Posterior vena cava (tissue), 2 donors: ENCODE measurements at regions of chr10 and their contacts with region 1.

Region 1: GRCh38 chr10:66085906-66086305 is 839.9 kb upstream of the LRRTM3 start:
- DNase-seq: no peak

Region 2: DNA sequence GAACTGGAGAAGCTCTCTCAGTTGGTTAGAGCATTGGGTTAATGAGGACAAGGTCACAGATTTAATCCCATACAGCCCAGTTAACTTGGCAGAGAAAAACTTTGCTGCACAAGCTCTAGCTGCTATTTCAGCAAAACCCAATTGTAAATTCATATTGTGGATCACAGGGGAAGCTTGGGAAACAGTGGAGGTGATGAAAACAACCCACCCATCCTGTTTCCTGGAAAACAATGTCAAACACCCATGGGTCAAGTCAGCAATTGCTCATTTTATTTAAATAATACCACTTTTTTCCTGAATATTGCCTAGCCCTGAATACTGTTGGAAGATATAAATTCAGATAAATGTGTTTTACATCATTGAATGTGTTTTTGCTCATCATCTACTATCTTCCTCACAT is 60.7 kb before region 1 on chr10:
- intact Hi-C with region 1: no loop called
- DNase-seq: no peak

Region 3: DNA sequence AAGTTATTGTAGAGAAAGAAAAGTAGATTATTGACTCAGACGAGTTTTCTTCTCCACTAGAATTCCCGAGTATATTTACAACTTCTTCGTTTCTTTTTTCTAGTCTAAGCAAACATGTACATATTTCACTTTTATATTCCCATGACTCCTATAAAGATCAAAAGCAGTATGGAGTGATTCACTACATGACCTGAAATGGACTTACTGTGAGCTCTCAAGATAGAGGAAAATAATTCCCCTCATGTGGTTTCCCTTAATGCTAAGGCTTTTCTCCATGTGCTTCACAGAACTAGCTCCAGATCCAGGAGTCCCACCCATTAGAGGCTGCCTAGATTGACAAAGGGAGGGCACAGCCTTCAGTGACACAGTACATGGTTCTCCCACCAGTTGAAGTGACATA is 16.9 kb after region 1 on chr10:
- intact Hi-C with region 1: loop called in 1 of 2 experiments (anchors 1 kb)
- DNase-seq: no peak